Activated CD8-positive, alpha-beta memory T cell treated with anti-CD3 and anti-CD28 coated beads, Interleukin-2, amount 10 ng/mL, durations not matched to agents 7 days and 5 days (primary cell): ENCODE measurements at regions of chr1 and their contacts with region 1.

Region 1: GRCh38 chr1:11838349-11839272 is 9.0 kb downstream of the NPPA start:
- DNase-seq: peak; percentile 77
- ATAC-seq: peak; percentile 94
- H3K4me3 Mint-ChIP-seq: no peak overlapping the region
- H3K27ac Mint-ChIP-seq: no peak overlapping the region
- H3K4me1 Mint-ChIP-seq: no peaks in the 10 kb centered on the region
- H3K27me3 Mint-ChIP-seq: no peaks in the 10 kb centered on the region

Region 2: GRCh38 chr1:11893907-11894251 is 55.3 kb after region 1 on chr1:
- CTCF ChIA-PET with region 1: interaction called, 21 read pairs
- DNase-seq: peak; percentile 78
- ATAC-seq: peak; percentile 88
- H3K4me3 Mint-ChIP-seq: no peak overlapping the region
- H3K27ac Mint-ChIP-seq: no peak overlapping the region
- H3K4me1 Mint-ChIP-seq: no peaks in the 10 kb centered on the region
- H3K27me3 Mint-ChIP-seq: peaks cover 37% of the 10 kb centered on the region

Region 3: GRCh38 chr1:11979028-11979850 is 140.6 kb after region 1 on chr1:
- CTCF ChIA-PET with region 1: interaction called, 14 read pairs
- DNase-seq: no peak
- ATAC-seq: no peak
- H3K4me3 Mint-ChIP-seq: peak overlapping the region; percentile 99
- H3K27ac Mint-ChIP-seq: peak overlapping the region; percentile 84
- H3K4me1 Mint-ChIP-seq: peaks cover 47% of the 10 kb centered on the region
- H3K27me3 Mint-ChIP-seq: no peaks in the 10 kb centered on the region